Body of pancreas (tissue), 4 donors: ENCODE measurements at regions of chr13 and their contacts with region 1.

Region 1: GRCh38 chr13:98279473-98280175 is 102.6 kb upstream of the RNF113B start:
- DNase-seq: no peak
- ATAC-seq: no peak
- H3K4me3 ChIP-seq: no peak overlapping the region
- H3K27ac ChIP-seq: no peak overlapping the region
- H3K4me1 ChIP-seq: peaks cover 24% of the 10 kb centered on the region
- H3K27me3 ChIP-seq: no peaks in the 10 kb centered on the region
- CTCF ChIP-seq: no peak
- POLR2A ChIP-seq: no peak

Region 2: DNA sequence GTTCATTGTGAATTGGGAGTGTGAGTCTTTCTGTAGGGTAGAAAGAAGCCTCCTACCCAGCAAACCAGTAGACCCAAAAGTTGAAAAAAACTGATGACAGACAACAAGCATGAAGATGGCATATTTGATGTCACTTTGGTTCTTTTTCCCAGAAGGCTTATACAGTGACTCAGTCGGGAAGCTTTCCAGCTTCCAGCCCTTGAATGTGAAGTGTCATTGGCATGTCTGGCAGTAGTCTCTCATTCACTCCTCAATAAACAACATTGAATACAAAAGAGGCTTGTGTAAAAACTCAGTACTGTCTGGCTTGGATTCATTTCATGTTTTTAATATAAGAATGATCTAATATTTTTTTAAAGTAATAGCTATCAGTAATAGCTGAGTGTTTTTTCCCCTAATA is 257.4 kb before region 1 on chr13:
- intact Hi-C with region 1: no loop called
- DNase-seq: no peak
- ATAC-seq: no peak
- H3K4me3 ChIP-seq: no peak overlapping the region
- H3K27ac ChIP-seq: peak overlapping the region in 1 of 4 donors; percentile 13
- H3K4me1 ChIP-seq: no peaks in the 10 kb centered on the region
- H3K27me3 ChIP-seq: no peaks in the 10 kb centered on the region
- CTCF ChIP-seq: no peak
- POLR2A ChIP-seq: no peak

Region 3: GRCh38 chr13:98222081-98222554 is 57.5 kb before region 1 on chr13:
- intact Hi-C with region 1: loop called (anchors 10 kb)
- DNase-seq: peak; percentile 85 to 91 (median 88)
- ATAC-seq: peak; percentile 94
- H3K4me3 ChIP-seq: no peak overlapping the region
- H3K27ac ChIP-seq: peak overlapping the region; percentile 66 to 84 (median 78)
- H3K4me1 ChIP-seq: peaks cover 59% of the 10 kb centered on the region
- H3K27me3 ChIP-seq: no peaks in the 10 kb centered on the region
- CTCF ChIP-seq: no peak
- POLR2A ChIP-seq: peak in 1 of 3 donors; percentile 31

Region 4: DNA sequence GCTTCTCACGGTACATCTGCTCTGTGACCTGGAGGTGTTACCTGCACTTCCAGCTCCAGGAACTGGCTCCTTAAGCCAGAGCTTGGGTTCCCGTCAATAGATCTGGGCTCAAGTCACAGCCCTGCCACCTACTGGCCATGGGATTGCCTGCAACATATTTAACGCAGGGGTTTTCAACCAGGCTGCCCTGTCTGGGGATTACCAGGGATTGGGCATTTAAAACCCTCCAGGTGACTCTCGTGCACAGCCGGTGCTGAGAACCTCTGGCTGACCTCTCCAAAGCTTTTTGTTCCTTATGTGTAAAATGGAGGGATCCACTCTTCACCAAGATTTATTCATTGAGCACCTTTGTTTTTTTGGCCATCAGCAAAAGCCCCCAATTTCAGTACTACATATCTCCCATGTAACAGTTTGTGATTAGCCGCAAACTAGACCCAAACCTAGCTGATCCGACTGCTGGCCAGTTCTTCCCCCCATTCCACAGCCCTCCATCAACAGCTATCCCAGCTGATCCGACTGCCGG is 373.9 kb after region 1 on chr13:
- intact Hi-C with region 1: no loop called
- DNase-seq: peak; percentile 89 to 92 (median 90)
- ATAC-seq: peak; percentile 95
- H3K4me3 ChIP-seq: no peak overlapping the region
- H3K27ac ChIP-seq: no peak overlapping the region
- H3K4me1 ChIP-seq: peaks cover 30% of the 10 kb centered on the region
- H3K27me3 ChIP-seq: no peaks in the 10 kb centered on the region
- CTCF ChIP-seq: peak; percentile 86 to 94 (median 90)
- POLR2A ChIP-seq: no peak

Region 5: GRCh38 chr13:98717256-98717655 is 437.6 kb after region 1 on chr13:
- intact Hi-C with region 1: no loop called
- DNase-seq: no peak
- ATAC-seq: peak; percentile 68
- H3K4me3 ChIP-seq: no peak overlapping the region
- H3K27ac ChIP-seq: peak overlapping the region in 2 of 4 donors; percentile 14 to 45
- H3K4me1 ChIP-seq: peaks cover 8% of the 10 kb centered on the region
- H3K27me3 ChIP-seq: no peaks in the 10 kb centered on the region
- CTCF ChIP-seq: no peak
- POLR2A ChIP-seq: no peak